ENCODE measurements at regions of chr7 and their contacts with region 1.

Region 1: GRCh38 chr7:121366852-121367431 is 29.2 kb downstream of the FAM3C start:
- DNase-seq: peak; percentile 10
- H3K4me3 ChIP-seq: no peak overlapping the region
- H3K27ac ChIP-seq: no peak overlapping the region
- H3K27me3 ChIP-seq: no peaks in the 10 kb centered on the region
- CTCF ChIP-seq: peak; percentile 74

Region 2: DNA sequence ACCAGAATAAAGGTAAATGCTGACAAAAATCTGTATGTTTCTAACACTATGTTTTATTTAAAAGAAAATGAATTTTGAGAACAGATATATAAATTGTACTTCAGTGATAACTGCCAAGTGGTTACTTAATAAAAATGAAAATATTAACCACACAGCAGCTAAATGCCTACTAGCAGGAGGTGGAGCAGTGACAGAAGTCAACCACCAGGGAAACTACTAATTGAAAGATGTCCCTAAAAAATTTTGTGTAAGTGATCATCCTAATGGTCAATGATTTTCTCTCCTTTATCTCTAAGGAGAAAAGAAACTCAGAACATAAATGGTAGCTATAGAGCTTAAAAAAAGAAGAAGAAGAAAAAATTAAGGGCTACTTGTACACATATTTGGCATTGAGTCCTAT is 15.3 kb before region 1 on chr7:
- CTCF ChIA-PET with region 1: interaction called, 28 read pairs
- POLR2A ChIA-PET with region 1: no interaction called
- DNase-seq: no peak
- H3K4me3 ChIP-seq: no peak overlapping the region
- H3K27ac ChIP-seq: no peak overlapping the region
- H3K27me3 ChIP-seq: no peaks in the 10 kb centered on the region
- CTCF ChIP-seq: no peak

Region 3: GRCh38 chr7:121379930-121380329 is 13.0 kb after region 1 on chr7:
- CTCF ChIA-PET with region 1: interaction called, 29 read pairs
- POLR2A ChIA-PET with region 1: no interaction called
- DNase-seq: no peak
- H3K4me3 ChIP-seq: no peak overlapping the region
- H3K27ac ChIP-seq: no peak overlapping the region
- H3K27me3 ChIP-seq: no peaks in the 10 kb centered on the region
- CTCF ChIP-seq: no peak

Region 4: DNA sequence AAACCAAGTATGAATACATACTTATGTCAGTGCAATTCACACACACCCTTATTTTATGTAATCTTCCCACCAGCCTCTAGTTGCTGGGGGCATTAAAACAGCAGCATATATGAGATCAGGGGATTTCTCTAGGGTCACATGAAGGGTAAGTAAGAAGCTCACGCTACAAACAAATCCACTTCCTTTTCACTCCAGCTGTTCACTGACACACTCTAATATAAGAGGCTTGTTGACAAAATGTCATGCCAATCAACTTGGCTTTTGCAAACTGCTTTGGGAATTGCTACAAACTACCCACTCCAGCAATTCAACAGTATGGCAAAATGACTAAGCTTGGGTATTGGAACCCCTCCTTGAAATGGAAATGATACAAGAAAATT is 18.8 kb after region 1 on chr7:
- CTCF ChIA-PET with region 1: interaction called, 29 read pairs
- POLR2A ChIA-PET with region 1: no interaction called
- DNase-seq: no peak
- H3K4me3 ChIP-seq: no peak overlapping the region
- H3K27ac ChIP-seq: no peak overlapping the region
- H3K27me3 ChIP-seq: no peaks in the 10 kb centered on the region
- CTCF ChIP-seq: no peak